Motor neuron (in vitro differentiated cells): ENCODE measurements at regions of chr4 and their contacts with region 1.

Region 1: GRCh38 chr4:5785806-5786680 is 75.0 kb downstream of the EVC start:
- ATAC-seq: peak in 3 of 8 experiments; percentile 17 to 59 (median 21)
- H3K4me3 ChIP-seq: no peak overlapping the region
- H3K27ac ChIP-seq: no peak overlapping the region
- H3K4me1 ChIP-seq: no peaks in the 10 kb centered on the region

Region 2: DNA sequence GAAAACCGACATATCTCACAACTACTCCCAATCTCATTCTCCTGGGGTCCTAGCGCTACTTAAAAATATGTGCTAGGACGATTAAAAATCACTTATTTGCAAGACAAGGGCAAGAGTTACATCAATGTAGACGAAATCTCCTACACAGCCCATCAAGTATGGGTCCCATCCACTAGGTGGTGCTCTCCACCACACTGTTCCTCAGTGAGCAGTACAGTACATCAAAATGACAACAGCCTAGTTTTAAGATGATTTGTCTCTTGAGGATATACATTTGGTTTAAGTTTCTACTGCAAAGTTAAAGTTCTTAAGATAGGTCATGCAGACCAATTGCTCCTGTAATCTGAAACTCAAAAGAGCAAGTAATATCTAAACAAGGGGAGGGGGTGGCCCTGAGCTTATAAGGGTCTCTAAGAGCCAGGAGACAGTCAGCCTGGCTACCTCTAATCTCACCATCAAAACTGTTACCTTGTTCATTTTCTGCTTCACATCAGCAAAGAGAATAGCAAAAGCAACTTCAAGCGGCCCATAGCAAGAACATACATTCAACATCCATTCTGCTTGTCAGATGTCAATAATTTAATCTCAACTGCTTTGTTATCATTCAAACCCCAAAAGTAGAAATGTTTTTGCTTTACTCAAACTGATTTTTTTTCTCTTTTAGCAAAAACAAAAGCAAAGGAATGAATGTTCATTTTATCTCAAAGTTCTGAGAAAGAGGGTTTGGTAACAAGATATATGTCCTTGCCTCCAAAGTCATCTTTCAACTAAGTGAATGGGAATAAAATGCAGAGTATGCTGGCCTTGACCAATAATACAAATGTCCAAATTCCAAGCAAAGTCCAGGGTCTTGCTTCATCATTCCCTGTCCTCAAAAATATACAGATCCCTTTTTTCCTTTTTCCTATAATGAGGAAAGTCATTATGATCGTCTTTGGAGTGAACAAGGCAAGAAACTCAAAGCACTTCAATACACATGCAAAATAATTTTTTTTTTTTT is 1297.3 kb before region 1 on chr4:
- in situ Hi-C with region 1: loop called in 1 of 9 experiments (anchors 25 kb)
- ATAC-seq: peak; percentile 82 to 97 (median 90)
- H3K4me3 ChIP-seq: no peak overlapping the region
- H3K27ac ChIP-seq: no peak overlapping the region
- H3K4me1 ChIP-seq: peaks cover 0 to 5% of the 10 kb centered on the region in 2 donors

Region 3: GRCh38 chr4:5037553-5038551 is 748.2 kb before region 1 on chr4:
- in situ Hi-C with region 1: loop called in 1 of 9 experiments (anchors 25 kb)
- ATAC-seq: peak in 5 of 8 experiments; percentile 14 to 84 (median 57)
- H3K4me3 ChIP-seq: no peak overlapping the region
- H3K27ac ChIP-seq: no peak overlapping the region
- H3K4me1 ChIP-seq: no peaks in the 10 kb centered on the region

Region 4: DNA sequence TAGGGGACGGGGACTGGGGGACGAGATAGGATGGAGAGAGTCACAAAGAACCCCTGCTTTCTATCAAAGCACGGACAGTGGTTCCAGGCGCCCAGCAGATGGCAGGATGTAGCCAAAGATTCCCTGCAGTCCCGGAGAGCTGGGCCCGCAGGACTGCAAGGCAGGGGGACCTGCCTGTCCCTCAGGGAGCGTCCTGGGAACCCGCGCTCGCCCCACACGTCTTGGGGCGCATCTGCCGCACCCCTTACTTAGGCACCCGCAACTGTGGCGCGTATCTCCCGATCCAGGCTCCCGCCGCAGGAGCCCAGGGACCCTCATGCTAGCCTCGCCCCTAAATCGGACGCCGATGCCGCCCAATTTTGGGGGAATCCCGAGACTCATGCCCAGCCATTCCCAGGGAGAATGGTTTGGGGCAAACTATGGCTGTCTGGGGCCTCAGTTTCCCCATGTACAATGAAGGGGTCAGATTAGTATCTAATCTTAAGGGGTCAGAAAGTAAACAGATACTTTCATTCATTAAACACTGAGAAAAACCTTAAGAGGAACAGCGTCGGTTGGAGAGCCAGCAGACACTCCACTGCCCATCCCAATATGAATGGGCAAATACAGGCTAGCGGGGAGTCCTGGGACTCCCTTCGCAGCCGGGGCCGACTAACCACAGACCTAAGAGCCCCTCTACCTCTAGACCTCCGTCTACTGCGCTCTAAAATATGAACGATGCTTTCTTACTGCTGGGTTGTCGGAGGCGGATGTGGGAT is 735.3 kb before region 1 on chr4:
- in situ Hi-C with region 1: loop called in 4 of 9 experiments (anchors 25 kb)
- ATAC-seq: peak; percentile 38 to 76 (median 72)
- H3K4me3 ChIP-seq: peak overlapping the region; percentile 30 to 48 (median 41)
- H3K27ac ChIP-seq: no peak overlapping the region
- H3K4me1 ChIP-seq: peaks cover 0 to 2% of the 10 kb centered on the region in 2 donors

Region 5: DNA sequence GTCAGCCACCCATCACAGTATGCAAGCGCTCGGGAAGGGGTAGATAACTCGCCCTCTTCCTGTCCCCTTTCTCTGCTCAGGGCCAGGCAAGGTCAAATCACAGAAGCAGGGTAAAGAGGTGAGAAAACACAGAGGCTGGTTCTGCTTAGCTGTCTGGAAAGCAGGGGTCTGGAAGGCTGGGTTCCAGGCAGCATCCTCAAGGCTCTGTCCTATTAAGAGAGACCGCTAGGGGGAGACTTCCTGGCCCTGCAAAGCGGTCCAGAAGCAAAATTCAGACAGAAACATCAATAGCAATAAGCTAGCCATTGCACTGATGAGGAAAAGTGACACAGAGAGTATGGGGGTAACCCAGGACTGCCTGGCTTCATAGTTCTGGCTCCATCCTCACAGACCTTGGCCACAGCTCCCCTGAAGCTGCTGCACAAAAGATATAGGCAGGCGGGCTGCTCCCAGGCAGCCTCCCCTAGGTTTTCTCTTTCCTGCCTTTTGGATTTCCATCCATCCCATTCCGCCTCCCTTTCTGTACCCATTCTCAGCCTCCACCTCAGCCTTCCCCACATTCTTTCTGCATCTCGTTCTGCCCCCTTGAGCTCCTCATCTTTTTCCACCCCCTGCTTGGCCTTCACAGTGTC is 386.1 kb before region 1 on chr4:
- in situ Hi-C with region 1: loop called in 2 of 9 experiments (anchors 25 kb)
- ATAC-seq: peak in 5 of 8 experiments; percentile 31 to 72 (median 53)
- H3K4me3 ChIP-seq: no peak overlapping the region
- H3K27ac ChIP-seq: no peak overlapping the region
- H3K4me1 ChIP-seq: no peaks in the 10 kb centered on the region

Region 6: DNA sequence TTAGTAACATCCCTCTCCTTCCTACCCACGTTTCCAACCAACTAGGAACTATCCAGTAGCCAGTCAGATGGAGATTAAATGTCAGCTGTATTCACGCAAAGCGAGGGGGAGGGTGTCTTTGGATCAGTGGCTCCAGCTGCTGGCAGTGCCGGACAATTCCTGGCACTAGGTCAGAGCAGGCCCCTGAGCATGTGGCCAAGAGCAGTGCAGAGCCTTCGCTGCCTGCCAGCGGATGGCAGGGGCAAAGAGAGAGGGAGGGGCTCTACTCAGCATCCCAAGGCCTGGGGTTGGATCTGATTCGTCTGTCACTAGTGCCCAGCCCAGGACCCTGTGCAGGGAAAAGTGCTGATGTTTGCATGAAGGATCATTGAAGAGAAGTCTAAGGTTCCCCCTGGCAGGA is 443.1 kb after region 1 on chr4:
- in situ Hi-C with region 1: no loop called
- ATAC-seq: peak in 4 of 8 experiments; percentile 24 to 51 (median 36)
- H3K4me3 ChIP-seq: no peak overlapping the region
- H3K27ac ChIP-seq: no peak overlapping the region
- H3K4me1 ChIP-seq: no peaks in the 10 kb centered on the region